ENCODE measurements at regions of chr11 and their contacts with region 1.

Region 1: DNA sequence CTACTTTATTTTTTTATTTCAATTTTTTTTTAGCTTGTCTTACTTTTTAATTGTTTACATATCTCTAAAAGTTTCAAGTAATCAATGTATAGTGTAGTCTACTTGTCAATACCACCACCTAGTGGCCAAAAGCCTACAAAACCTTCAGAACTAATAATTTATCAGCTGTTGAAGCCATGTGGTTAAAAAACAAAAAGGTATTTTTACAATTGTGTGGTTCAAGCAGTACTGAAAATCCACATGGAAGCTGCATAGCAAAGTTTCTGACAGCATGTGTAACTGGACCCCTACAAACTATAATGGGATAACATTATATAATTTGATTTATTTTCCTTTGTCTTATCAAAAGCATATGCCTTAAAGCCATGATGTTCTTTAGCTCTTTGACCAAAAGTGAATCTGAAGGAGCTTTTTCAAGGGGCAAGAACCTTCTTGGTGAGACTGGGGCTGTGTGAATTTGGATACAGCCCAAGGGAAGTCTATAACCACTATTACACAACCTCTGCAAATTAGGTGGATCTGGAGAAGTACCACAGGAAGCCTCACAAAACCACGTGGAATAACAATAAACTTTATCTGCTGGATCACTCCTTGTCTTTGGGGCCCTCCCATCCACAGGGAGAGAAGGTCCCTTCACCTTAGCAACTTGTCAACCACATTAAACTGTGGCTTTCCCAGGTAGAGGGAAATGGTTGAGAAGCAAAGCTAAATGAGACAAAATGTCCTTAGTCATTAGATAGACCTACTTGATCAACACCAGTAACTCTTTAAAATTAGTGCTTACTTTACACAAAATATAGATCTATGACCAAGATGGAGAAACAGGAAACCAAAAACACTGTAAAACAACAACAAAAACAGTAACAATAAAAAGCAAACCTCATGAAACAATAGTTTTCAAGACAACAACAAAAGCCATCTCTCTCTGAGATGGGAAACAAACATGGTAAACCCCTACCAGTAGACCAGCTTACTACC is 9.9 kb downstream of the NARS2 start:
- DNase-seq: peak in 1 of 2 experiments; percentile 80
- H3K4me3 ChIP-seq: no peak overlapping the region
- H3K4me3 Mint-ChIP-seq: no peak overlapping the region
- H3K27ac Mint-ChIP-seq: no peak overlapping the region
- H3K4me1 ChIP-seq: peaks cover 41% of the 10 kb centered on the region
- H3K4me1 Mint-ChIP-seq: peaks cover 20% of the 10 kb centered on the region
- H3K27me3 ChIP-seq: no peaks in the 10 kb centered on the region
- H3K27me3 Mint-ChIP-seq: no peaks in the 10 kb centered on the region
- CTCF ChIP-seq: peak; percentile 81 to 93

Region 2: GRCh38 chr11:78149646-78150045 is 415.1 kb before region 1 on chr11:
- CTCF ChIA-PET with region 1: interaction called, 15 read pairs
- POLR2A ChIA-PET with region 1: no interaction called
- intact Hi-C with region 1: no loop called
- DNase-seq: peak in 1 of 2 experiments; percentile 31
- H3K4me3 ChIP-seq: no peak overlapping the region
- H3K4me3 Mint-ChIP-seq: no peak overlapping the region
- H3K27ac Mint-ChIP-seq: no peak overlapping the region
- H3K4me1 ChIP-seq: peaks cover 19% of the 10 kb centered on the region
- H3K4me1 Mint-ChIP-seq: peaks cover 16% of the 10 kb centered on the region
- H3K27me3 ChIP-seq: no peaks in the 10 kb centered on the region
- H3K27me3 Mint-ChIP-seq: no peaks in the 10 kb centered on the region
- CTCF ChIP-seq: peak in 1 of 2 experiments; percentile 15

Region 3: GRCh38 chr11:78365381-78365792 is 199.4 kb before region 1 on chr11:
- CTCF ChIA-PET with region 1: interaction called, 4 read pairs
- POLR2A ChIA-PET with region 1: no interaction called
- intact Hi-C with region 1: loop called (anchors 1 kb)
- DNase-seq: peak; percentile 85 to 90
- H3K4me3 ChIP-seq: no peak overlapping the region
- H3K4me3 Mint-ChIP-seq: peak overlapping the region; percentile 48
- H3K27ac Mint-ChIP-seq: peak overlapping the region; percentile 75
- H3K4me1 ChIP-seq: peaks cover 73% of the 10 kb centered on the region
- H3K4me1 Mint-ChIP-seq: peaks cover 58% of the 10 kb centered on the region
- H3K27me3 ChIP-seq: no peaks in the 10 kb centered on the region
- H3K27me3 Mint-ChIP-seq: no peaks in the 10 kb centered on the region
- CTCF ChIP-seq: no peak

Region 4: GRCh38 chr11:78432058-78432515 is 132.7 kb before region 1 on chr11:
- CTCF ChIA-PET with region 1: interaction called, 8 read pairs
- POLR2A ChIA-PET with region 1: interaction called, 3 read pairs
- intact Hi-C with region 1: loop called (anchors 1 kb)
- DNase-seq: peak in 1 of 2 experiments; percentile 64
- H3K4me3 ChIP-seq: no peak overlapping the region
- H3K4me3 Mint-ChIP-seq: no peak overlapping the region
- H3K27ac Mint-ChIP-seq: no peak overlapping the region
- H3K4me1 ChIP-seq: peaks cover 14% of the 10 kb centered on the region
- H3K4me1 Mint-ChIP-seq: peaks cover 28% of the 10 kb centered on the region
- H3K27me3 ChIP-seq: no peaks in the 10 kb centered on the region
- H3K27me3 Mint-ChIP-seq: no peaks in the 10 kb centered on the region
- CTCF ChIP-seq: peak; percentile 67 to 83

Region 5: GRCh38 chr11:78548911-78549590 is 15.7 kb before region 1 on chr11:
- CTCF ChIA-PET with region 1: interaction called, 13 read pairs
- POLR2A ChIA-PET with region 1: no interaction called
- intact Hi-C with region 1: no loop called
- DNase-seq: no peak
- H3K4me3 ChIP-seq: no peak overlapping the region
- H3K4me3 Mint-ChIP-seq: no peak overlapping the region
- H3K27ac Mint-ChIP-seq: peak overlapping the region; percentile 56
- H3K4me1 ChIP-seq: peaks cover 32% of the 10 kb centered on the region
- H3K4me1 Mint-ChIP-seq: peaks cover 29% of the 10 kb centered on the region
- H3K27me3 ChIP-seq: no peaks in the 10 kb centered on the region
- H3K27me3 Mint-ChIP-seq: no peaks in the 10 kb centered on the region
- CTCF ChIP-seq: no peak

Measured in Caco-2 (cell line).